Transverse colon (tissue), 4 donors: ENCODE measurements at regions of chr22 and their contacts with region 1.

Region 1: DNA sequence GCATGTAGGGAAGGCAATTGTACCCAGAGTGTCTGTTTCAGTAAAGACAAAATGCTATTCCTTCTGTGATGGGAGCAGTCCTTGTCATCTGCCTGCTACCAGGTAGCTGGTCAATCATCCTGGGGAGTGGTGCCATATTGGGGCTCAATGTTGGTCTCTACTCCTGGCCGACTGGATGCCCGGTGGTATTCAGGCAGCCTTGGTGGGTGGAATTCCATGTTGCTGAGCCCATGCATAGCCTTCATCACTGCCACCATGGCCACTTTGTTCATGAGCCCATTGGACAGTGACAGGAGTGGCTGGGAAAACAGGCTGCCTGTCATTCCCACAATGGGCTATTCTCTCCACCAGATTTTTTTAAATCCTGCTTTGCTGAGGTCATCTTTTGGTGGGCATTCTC is 121.0 kb downstream of the WNT7B start:
- DNase-seq: no peak
- H3K4me3 ChIP-seq: no peak overlapping the region
- H3K27ac ChIP-seq: no peak overlapping the region
- H3K4me1 ChIP-seq: no peaks in the 10 kb centered on the region
- H3K27me3 ChIP-seq: no peaks in the 10 kb centered on the region
- CTCF ChIP-seq: no peak
- EP300 ChIP-seq: no peak
- POLR2A ChIP-seq: no peak

Region 2: DNA sequence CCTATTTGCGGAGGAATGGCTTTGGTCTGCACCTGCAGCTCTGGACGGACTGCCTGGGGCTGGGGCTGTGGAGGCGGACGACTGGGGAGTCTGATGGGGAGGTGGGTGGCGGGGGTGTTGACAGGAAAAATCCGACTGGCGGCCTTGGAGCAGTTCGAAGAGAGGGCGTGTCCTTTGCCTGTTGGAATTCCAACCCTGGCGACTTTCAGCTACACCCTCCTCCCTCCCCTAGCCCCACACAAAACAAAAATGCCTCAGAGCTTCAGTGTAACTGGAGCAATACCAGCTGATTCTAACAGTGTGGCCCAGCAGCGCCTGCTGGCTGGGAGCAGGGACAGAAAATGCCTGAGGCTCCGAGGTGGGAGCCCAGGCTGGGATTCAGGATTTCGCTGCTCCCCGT is 98.9 kb before region 1 on chr22:
- in situ Hi-C with region 1: no loop called
- intact Hi-C with region 1: no loop called
- DNase-seq: no peak
- H3K4me3 ChIP-seq: no peak overlapping the region
- H3K27ac ChIP-seq: peak overlapping the region in 2 of 4 donors; percentile 46 to 57
- H3K4me1 ChIP-seq: peaks cover 0 to 7% (median 2%) of the 10 kb centered on the region in 4 donors
- H3K27me3 ChIP-seq: no peaks in the 10 kb centered on the region
- CTCF ChIP-seq: no peak
- EP300 ChIP-seq: no peak
- POLR2A ChIP-seq: no peak

Region 3: GRCh38 chr22:45777852-45778172 is 78.1 kb before region 1 on chr22:
- in situ Hi-C with region 1: no loop called
- intact Hi-C with region 1: loop called (anchors 2 kb)
- DNase-seq: no peak
- H3K4me3 ChIP-seq: no peak overlapping the region
- H3K27ac ChIP-seq: no peak overlapping the region
- H3K4me1 ChIP-seq: no peaks in the 10 kb centered on the region
- H3K27me3 ChIP-seq: no peaks in the 10 kb centered on the region
- CTCF ChIP-seq: no peak
- EP300 ChIP-seq: no peak
- POLR2A ChIP-seq: no peak

Region 4: DNA sequence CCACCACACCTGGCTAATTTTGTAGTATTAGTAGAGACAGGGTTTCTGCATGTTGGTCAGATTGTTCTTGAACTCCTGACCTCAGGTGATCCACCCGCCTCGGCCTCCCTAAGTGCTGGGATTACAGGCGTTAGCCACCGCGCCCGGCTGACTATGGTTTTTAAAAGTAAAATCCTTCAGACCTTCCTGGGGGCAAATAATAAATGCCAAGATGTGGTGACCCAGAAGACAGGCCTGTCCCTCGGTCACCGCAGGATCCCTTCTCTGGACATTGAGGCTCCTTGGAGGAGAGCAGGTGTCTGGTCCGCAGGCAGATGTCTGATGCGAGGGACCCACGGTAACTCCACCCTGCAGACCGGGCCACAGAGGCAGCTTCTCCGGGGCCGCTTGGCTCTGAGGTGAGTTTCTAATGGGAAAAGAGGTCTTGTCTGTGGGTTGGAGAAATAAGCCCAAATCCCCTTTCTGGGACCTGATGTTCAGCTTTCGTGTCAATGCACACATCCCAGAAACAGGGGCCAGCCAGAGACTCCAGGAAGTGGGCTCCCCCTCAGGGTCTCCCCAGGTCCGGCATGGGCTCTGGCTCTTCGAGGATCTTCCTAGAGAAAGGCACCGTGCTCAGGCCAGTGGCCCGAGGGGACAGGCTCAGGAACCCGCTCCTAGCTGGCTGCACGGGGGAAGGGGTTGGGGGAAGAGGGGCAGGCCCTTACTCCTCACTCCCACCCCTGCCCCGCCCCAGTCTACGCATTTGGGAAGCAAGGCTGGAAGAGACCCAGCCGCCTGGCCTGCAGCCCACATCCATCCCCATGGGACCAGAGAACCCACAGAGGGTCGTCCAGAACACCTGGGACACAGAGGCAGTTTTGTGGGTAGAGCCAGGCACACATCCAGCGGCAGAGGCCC is 20.4 kb after region 1 on chr22:
- in situ Hi-C with region 1: no loop called
- intact Hi-C with region 1: no loop called
- DNase-seq: peak; percentile 4
- H3K4me3 ChIP-seq: no peak overlapping the region
- H3K27ac ChIP-seq: no peak overlapping the region
- H3K4me1 ChIP-seq: no peaks in the 10 kb centered on the region
- H3K27me3 ChIP-seq: peaks cover 74% of the 10 kb centered on the region
- CTCF ChIP-seq: no peak
- EP300 ChIP-seq: no peak
- POLR2A ChIP-seq: no peak

Region 5: GRCh38 chr22:45934659-45935341 is 78.8 kb after region 1 on chr22:
- in situ Hi-C with region 1: no loop called
- intact Hi-C with region 1: no loop called
- DNase-seq: no peak
- H3K4me3 ChIP-seq: no peak overlapping the region
- H3K27ac ChIP-seq: no peak overlapping the region
- H3K4me1 ChIP-seq: no peaks in the 10 kb centered on the region
- H3K27me3 ChIP-seq: peaks cover 49% of the 10 kb centered on the region
- CTCF ChIP-seq: no peak
- EP300 ChIP-seq: no peak
- POLR2A ChIP-seq: no peak